ENCODE measurements at regions of chr17 and their contacts with region 1.

Region 1: DNA sequence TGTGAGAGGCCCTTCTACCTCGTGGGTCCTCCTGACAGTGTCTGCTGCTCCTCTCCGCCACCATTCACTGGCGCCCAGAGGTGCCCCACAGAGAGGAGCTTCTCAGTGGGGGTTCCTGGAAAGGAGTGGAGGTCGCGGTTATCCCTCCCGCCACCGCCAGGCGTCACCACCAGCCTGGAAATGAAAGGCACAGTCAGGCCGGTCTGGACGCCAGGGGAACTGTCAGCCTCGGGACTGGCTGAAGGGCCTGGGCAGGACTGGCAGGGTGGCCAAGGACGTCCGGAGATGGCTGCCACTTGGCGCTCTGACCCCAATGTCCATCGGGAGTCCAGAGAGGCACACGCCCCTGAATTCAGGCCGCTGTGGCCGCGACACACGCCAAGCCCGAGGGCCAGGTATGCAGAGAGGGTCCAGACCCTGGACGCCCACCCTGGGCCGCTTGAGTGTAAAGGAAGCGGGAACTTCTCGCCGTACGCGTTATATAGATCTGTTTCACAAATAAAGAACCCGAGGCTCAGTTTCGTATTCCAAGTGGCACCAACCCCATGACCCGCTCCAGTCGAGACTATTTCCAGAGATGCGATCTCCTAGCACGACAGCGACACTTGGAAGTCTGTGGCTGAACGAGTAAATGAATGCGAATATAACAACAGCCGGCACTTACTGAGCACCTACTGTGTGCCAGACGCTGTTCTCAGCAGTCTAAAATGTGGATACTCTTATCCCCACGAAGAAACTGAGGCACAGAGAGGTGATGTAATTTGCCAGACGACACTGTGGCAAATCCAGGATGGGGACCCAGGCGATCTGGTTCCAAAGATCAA is 7.6 kb upstream of the NXPH3 start:
- DNase-seq: peak; percentile 98
- H3K4me3 Mint-ChIP-seq: peak overlapping the region; percentile 68
- H3K27ac Mint-ChIP-seq: no peak overlapping the region
- H3K4me1 Mint-ChIP-seq: peaks cover 14% of the 10 kb centered on the region
- H3K27me3 Mint-ChIP-seq: peaks cover 64% of the 10 kb centered on the region
- CTCF ChIP-seq: peak; percentile 98

Region 2: GRCh38 chr17:49482144-49482817 is 85.8 kb before region 1 on chr17:
- CTCF ChIA-PET with region 1: no interaction called
- intact Hi-C with region 1: no loop called
- DNase-seq: no peak
- H3K4me3 Mint-ChIP-seq: no peak overlapping the region
- H3K27ac Mint-ChIP-seq: no peak overlapping the region
- H3K4me1 Mint-ChIP-seq: no peaks in the 10 kb centered on the region
- H3K27me3 Mint-ChIP-seq: peaks cover 100% of the 10 kb centered on the region
- CTCF ChIP-seq: no peak

Region 3: GRCh38 chr17:49694847-49695683 is 127.0 kb after region 1 on chr17:
- CTCF ChIA-PET with region 1: interaction called, 26 read pairs
- intact Hi-C with region 1: loop called (anchors 1 kb)
- DNase-seq: peak; percentile 75
- H3K4me3 Mint-ChIP-seq: no peak overlapping the region
- H3K27ac Mint-ChIP-seq: no peak overlapping the region
- H3K4me1 Mint-ChIP-seq: peaks cover 17% of the 10 kb centered on the region
- H3K27me3 Mint-ChIP-seq: peaks cover 26% of the 10 kb centered on the region
- CTCF ChIP-seq: peak; percentile 94

Region 4: GRCh38 chr17:49779739-49780231 is 211.7 kb after region 1 on chr17:
- CTCF ChIA-PET with region 1: no interaction called
- intact Hi-C with region 1: loop called (anchors 5 kb)
- DNase-seq: peak; percentile 36
- H3K4me3 Mint-ChIP-seq: no peak overlapping the region
- H3K27ac Mint-ChIP-seq: no peak overlapping the region
- H3K4me1 Mint-ChIP-seq: no peaks in the 10 kb centered on the region
- H3K27me3 Mint-ChIP-seq: peaks cover 86% of the 10 kb centered on the region
- CTCF ChIP-seq: peak; percentile 52

Region 5: GRCh38 chr17:49851387-49852291 is 283.6 kb after region 1 on chr17:
- CTCF ChIA-PET with region 1: interaction called, 6 read pairs
- intact Hi-C with region 1: loop called (anchors 5 kb)
- DNase-seq: peak; percentile 91
- H3K4me3 Mint-ChIP-seq: peak overlapping the region; percentile 68
- H3K27ac Mint-ChIP-seq: no peak overlapping the region
- H3K4me1 Mint-ChIP-seq: no peaks in the 10 kb centered on the region
- H3K27me3 Mint-ChIP-seq: peaks cover 59% of the 10 kb centered on the region
- CTCF ChIP-seq: peak; percentile 94